ENCODE measurements at regions of chr12 and their contacts with region 1.

Region 1: DNA sequence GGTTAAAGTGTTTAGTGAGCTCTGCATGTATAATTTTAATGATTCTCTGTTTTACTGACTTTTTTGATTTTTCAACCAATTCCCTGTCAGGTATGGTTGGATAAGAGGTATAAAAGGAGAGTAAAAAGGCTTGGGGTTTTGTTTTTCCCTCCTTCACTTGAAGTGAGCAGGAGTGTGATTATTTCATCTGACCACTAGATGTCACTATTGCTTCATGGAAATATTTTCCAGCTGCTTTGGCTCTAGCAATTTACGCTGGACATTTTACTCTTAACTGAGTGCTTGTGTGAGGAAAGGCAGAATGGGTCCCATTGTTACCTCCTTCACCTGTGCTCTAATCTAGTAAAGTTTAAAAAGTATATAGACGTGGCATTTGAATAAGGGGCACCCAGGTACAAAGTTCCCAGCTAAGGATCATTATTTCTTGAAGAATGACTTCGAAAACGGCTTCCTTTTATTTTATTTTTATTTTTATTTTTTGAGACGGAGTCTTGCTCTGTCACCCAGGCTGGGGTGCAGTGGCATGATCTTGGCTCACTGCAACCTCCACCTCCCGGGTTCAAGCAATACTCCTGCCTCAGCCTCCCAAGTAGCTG is 66.5 kb downstream of the TBC1D30 start:
- DNase-seq: no peak
- ATAC-seq: peak; percentile 49
- H3K4me3 Mint-ChIP-seq: no peak overlapping the region
- H3K27ac Mint-ChIP-seq: no peak overlapping the region
- H3K4me1 Mint-ChIP-seq: no peaks in the 10 kb centered on the region
- H3K27me3 Mint-ChIP-seq: peaks cover 2% of the 10 kb centered on the region

Region 2: GRCh38 chr12:65106948-65107347 is 216.0 kb after region 1 on chr12:
- CTCF ChIA-PET with region 1: interaction called, 13 read pairs
- POLR2A ChIA-PET with region 1: no interaction called
- DNase-seq: no peak
- ATAC-seq: no peak
- H3K4me3 Mint-ChIP-seq: no peak overlapping the region
- H3K27ac Mint-ChIP-seq: no peak overlapping the region
- H3K4me1 Mint-ChIP-seq: no peaks in the 10 kb centered on the region
- H3K27me3 Mint-ChIP-seq: peaks cover 17% of the 10 kb centered on the region